Ascending aorta (tissue), 2 donors: ENCODE measurements at regions of chr3 and their contacts with region 1.

Region 1: DNA sequence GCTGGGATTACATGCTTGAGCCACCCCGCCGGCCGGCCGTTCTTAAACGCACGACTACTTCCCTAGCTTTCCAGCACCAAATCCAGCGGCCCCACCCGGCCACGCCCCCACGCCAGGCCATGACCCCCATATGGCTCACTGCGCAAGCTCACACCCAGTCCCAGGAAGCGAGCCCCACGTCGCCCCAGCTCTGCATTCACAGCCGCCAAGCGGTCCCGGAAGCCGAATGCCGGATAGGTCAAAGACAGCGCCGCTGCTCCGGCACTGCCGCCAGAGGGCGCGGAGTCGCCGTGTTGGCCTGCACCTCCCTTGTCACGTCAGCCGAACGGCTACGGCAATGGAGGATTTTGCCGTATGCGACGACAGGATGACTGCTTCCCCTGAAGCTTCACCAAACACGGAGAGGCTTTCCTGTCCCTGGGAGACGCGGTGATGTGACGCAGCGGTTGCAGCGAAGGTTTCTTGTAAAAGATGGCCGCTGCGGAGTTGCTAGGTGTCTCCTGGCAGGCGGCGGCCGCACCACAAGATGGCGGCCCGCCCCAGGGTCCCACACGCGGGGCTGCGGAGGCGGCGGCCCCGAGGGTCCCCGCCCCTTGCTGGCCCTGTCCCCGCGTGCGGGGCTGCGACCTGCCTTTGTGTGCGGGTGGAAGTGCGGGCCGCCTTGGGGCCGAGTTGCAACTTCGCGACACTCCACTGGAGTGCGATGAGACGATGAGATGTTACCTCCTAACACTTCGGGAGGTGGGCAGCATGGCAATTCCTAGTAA is 30.2 kb upstream of the RPN1 start:
- DNase-seq: peak; percentile 95 to 100
- H3K4me3 ChIP-seq: peak overlapping the region; percentile 65 to 90
- H3K27ac ChIP-seq: peak overlapping the region; percentile 94 to 97
- H3K4me1 ChIP-seq: no peaks in the 10 kb centered on the region
- H3K27me3 ChIP-seq: no peaks in the 10 kb centered on the region
- CTCF ChIP-seq: peak; percentile 95 to 99 (median 97)

Region 2: GRCh38 chr3:128650096-128651050 is 30.4 kb before region 1 on chr3 and contains the start of gene RPN1:
- intact Hi-C with region 1: loop called (anchors 1 kb)
- DNase-seq: peak; percentile 87 to 98
- H3K4me3 ChIP-seq: peak within 1 kb of the TSS; percentile 99 to 100
- H3K27ac ChIP-seq: peak within 1 kb of the TSS; percentile 96 to 99
- H3K4me1 ChIP-seq: peaks cover 0 to 10% of the 10 kb centered on the region in 2 donors
- H3K27me3 ChIP-seq: no peaks in the 10 kb centered on the region
- CTCF ChIP-seq: no peak
- total RNA-seq, gene RPN1: 226 TPM

Region 3: DNA sequence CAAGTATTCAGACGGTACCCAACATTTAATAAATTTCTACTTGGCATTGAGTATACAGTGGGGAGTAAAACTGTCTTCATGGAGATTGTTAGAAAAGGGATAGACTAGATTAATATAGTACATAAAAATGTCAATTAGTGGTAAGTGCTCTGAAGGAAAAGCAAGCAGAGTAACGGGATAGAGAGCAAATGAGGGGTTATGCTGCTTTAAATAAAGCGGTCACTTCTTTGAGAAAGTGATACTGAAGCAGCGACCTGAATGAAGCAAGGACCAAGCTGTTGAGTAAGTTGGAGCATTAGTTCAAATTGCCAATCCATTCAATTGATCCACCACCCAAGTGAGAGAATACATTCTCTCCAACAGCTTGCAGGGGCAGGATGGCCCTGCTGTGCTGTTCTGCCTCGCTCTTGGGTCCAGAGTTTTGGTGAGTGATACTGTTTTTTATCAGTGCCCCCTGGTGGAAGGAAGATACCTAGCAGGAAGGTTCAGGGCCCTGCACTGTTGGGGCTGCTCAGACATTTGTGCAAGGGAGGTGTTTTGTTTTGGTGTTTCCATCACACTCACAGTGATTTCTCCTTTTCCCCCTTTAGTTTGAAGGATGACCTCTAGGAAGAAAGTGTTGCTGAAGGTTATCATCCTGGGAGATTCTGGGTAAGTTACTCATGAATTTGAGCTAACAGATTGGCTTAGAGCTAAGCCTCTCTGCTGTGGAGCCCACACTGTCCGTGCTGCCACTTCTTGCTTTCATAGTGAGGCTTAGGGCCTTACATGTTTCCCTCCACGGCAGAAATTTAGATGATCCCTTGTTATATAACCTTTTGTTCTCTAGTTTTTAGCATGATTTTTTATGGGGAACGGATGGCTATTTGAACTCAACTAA is 114.2 kb after region 1 on chr3:
- intact Hi-C with region 1: loop called (anchors 1 kb)
- DNase-seq: peak in 1 of 2 donors; percentile 75
- H3K4me3 ChIP-seq: no peak overlapping the region
- H3K27ac ChIP-seq: no peak overlapping the region
- H3K4me1 ChIP-seq: peaks cover 0 to 11% of the 10 kb centered on the region in 2 donors
- H3K27me3 ChIP-seq: no peaks in the 10 kb centered on the region
- CTCF ChIP-seq: peak; percentile 58 to 78 (median 68)

Region 4: GRCh38 chr3:128845778-128846485 is 165.1 kb after region 1 on chr3:
- intact Hi-C with region 1: loop called (anchors 1 kb)
- DNase-seq: peak; percentile 32 to 91
- H3K4me3 ChIP-seq: peak overlapping the region; percentile 57 to 66
- H3K27ac ChIP-seq: peak overlapping the region; percentile 35 to 54
- H3K4me1 ChIP-seq: peaks cover 0 to 5% of the 10 kb centered on the region in 2 donors
- H3K27me3 ChIP-seq: no peaks in the 10 kb centered on the region
- CTCF ChIP-seq: peak; percentile 33 to 72 (median 51)

Region 5: GRCh38 chr3:128879125-128879969 is 198.6 kb after region 1 on chr3 and contains the start of gene ACAD9:
- intact Hi-C with region 1: loop called (anchors 1 kb)
- DNase-seq: peak; percentile 94 to 98
- H3K4me3 ChIP-seq: peak within 1 kb of the TSS; percentile 71 to 86
- H3K27ac ChIP-seq: peak within 1 kb of the TSS; percentile 91 to 95
- H3K4me1 ChIP-seq: peaks cover 17% of the 10 kb centered on the region in 2 donors
- H3K27me3 ChIP-seq: no peaks in the 10 kb centered on the region
- CTCF ChIP-seq: no peak
- total RNA-seq, gene ACAD9: 23.4 TPM